HEK293T (cell line): ENCODE measurements at regions of chr12 and their contacts with region 1.

Region 1: DNA sequence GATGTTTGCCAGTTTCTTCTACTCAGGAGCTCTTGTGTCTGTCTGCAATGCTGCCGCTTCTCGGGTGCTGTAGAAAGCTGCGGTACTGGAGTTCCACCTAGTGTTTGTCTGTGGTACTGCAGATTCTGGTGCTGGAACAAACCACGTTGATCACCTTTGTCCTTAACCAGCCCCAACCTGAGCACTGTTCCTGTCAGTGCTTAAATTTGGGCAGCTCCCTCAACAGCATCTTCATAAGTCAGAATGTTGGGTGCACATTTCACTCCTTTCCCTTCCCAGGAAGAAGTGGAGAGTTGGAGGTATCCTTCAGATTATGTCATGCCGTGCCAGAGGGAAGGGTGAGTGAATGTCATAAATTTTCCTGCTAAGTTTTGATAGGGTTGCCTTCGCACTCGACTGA is 48.7 kb upstream of the LALBA start:
- DNase-seq: peak; percentile 83

Region 2: GRCh38 chr12:48221645-48222044 is 396.9 kb before region 1 on chr12:
- CTCF ChIA-PET with region 1: interaction called, 10 read pairs
- POLR2A ChIA-PET with region 1: no interaction called
- DNase-seq: peak; percentile 12

Region 3: DNA sequence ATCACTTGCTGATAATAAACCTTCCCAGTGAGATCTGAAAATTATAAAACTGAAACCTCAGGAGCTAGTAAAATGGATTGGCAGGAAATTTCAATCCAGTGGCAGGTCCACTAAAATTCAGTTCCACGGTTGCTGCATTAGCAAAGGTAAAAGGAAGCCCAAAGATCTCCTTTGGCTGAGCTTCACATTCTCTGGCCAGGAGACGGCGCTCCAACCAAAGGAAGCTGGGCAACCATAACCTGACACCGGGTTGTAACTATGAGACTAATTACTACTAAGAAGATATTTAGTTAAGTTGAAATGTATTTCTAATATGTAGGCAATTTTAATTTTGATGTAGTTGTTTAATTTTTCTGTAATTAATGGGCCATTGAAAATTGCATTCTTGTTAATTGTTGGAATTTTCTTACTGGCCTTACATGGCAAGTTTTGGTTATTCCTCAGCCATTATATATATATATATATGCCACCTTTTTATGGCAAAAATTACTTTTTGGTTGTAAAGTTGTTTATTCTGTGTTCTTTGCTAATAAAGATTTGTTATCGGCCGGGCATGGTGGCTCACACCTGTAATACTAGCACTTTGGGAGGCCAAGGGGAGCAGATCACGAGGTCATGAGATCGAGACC is 76.1 kb before region 1 on chr12:
- CTCF ChIA-PET with region 1: interaction called, 79 read pairs
- POLR2A ChIA-PET with region 1: interaction called, 4 read pairs
- DNase-seq: peak; percentile 64